A549 (cell line): ENCODE measurements at regions of chr17 and their contacts with region 1.

Region 1: DNA sequence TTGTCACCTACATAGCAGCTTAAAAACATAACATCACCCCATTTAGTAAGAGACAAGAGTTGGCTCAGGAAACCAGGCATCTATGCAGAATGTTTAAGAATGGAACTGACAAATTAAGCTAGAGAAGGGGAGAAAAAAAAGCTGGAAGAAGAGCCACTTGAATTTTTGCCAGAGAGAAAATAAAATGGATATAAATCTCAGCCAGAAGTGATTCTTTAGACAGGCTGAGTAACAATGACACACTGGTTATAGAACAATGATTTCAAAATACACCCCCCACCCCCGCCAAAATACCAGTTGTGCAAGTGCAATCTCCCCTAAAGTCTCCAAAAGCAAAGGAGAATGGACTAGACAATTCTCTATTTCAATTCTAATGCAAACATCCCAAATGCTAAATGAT is 22.4 kb downstream of the LSM12 start:
- DNase-seq: no peak
- ATAC-seq: no peak
- H3K4me3 ChIP-seq: no peak overlapping the region
- H3K27ac ChIP-seq: 0 out of 6 replicates have a peak overlapping the region, but pooled peaks of 1 of the 2 experiments have one; percentile 0
- H3K4me1 ChIP-seq: peaks cover 11% of the 10 kb centered on the region
- CTCF ChIP-seq: no peak
- EP300 ChIP-seq: no peak
- POLR2A ChIP-seq: no peak
- RAD21 ChIP-seq: no peak

Region 2: GRCh38 chr17:44006598-44007345 is 37.3 kb before region 1 on chr17:
- CTCF ChIA-PET with region 1: interaction called, 19 read pairs
- POLR2A ChIA-PET with region 1: no interaction called
- DNase-seq: peak; percentile 97
- ATAC-seq: peak; percentile 78 to 90
- H3K4me3 ChIP-seq: peak overlapping the region; percentile 51
- H3K27ac ChIP-seq: peak overlapping the region; percentile 67 to 83
- H3K4me1 ChIP-seq: peaks cover 18% of the 10 kb centered on the region
- CTCF ChIP-seq: peak; percentile 37; the same call in 2 of the 3 replicates
- EP300 ChIP-seq: no peak
- POLR2A ChIP-seq: peak; percentile 23
- RAD21 ChIP-seq: peak in 1 of 2 experiments; percentile 33; a peak in 3 of 5 replicates

Region 3: GRCh38 chr17:44024271-44024663 is 19.8 kb before region 1 on chr17:
- CTCF ChIA-PET with region 1: interaction called, 145 read pairs
- POLR2A ChIA-PET with region 1: interaction called, 4 read pairs
- DNase-seq: no peak
- ATAC-seq: peak in 1 of 2 experiments; percentile 17; a peak in 3 of 6 replicates
- H3K4me3 ChIP-seq: no peak overlapping the region
- H3K27ac ChIP-seq: no peak overlapping the region
- H3K4me1 ChIP-seq: no peaks in the 10 kb centered on the region
- CTCF ChIP-seq: no peak
- EP300 ChIP-seq: no peak
- POLR2A ChIP-seq: no peak
- RAD21 ChIP-seq: no peak

Region 4: GRCh38 chr17:44061446-44061845 is 17.4 kb after region 1 on chr17:
- CTCF ChIA-PET with region 1: interaction called, 13 read pairs
- POLR2A ChIA-PET with region 1: interaction called, 7 read pairs
- DNase-seq: no peak
- ATAC-seq: no peak
- H3K4me3 ChIP-seq: no peak overlapping the region
- H3K27ac ChIP-seq: no peak overlapping the region
- H3K4me1 ChIP-seq: peaks cover 18% of the 10 kb centered on the region
- CTCF ChIP-seq: no peak
- EP300 ChIP-seq: no peak
- POLR2A ChIP-seq: no peak
- RAD21 ChIP-seq: no peak